Activated CD4-positive, alpha-beta T cell treated with anti-CD3 and anti-CD28 coated beads for 36 hours (primary cell): ENCODE measurements at regions of chr7 and their contacts with region 1.

Region 1: GRCh38 chr7:66493235-66494181 is 135.2 kb upstream of the KCTD7 start:
- DNase-seq: peak; percentile 98
- ATAC-seq: peak; percentile 94
- H3K4me3 Mint-ChIP-seq: peak overlapping the region; percentile 94
- H3K27ac Mint-ChIP-seq: peak overlapping the region; percentile 97
- H3K4me1 Mint-ChIP-seq: peaks cover 4% of the 10 kb centered on the region
- H3K27me3 Mint-ChIP-seq: no peaks in the 10 kb centered on the region

Region 2: DNA sequence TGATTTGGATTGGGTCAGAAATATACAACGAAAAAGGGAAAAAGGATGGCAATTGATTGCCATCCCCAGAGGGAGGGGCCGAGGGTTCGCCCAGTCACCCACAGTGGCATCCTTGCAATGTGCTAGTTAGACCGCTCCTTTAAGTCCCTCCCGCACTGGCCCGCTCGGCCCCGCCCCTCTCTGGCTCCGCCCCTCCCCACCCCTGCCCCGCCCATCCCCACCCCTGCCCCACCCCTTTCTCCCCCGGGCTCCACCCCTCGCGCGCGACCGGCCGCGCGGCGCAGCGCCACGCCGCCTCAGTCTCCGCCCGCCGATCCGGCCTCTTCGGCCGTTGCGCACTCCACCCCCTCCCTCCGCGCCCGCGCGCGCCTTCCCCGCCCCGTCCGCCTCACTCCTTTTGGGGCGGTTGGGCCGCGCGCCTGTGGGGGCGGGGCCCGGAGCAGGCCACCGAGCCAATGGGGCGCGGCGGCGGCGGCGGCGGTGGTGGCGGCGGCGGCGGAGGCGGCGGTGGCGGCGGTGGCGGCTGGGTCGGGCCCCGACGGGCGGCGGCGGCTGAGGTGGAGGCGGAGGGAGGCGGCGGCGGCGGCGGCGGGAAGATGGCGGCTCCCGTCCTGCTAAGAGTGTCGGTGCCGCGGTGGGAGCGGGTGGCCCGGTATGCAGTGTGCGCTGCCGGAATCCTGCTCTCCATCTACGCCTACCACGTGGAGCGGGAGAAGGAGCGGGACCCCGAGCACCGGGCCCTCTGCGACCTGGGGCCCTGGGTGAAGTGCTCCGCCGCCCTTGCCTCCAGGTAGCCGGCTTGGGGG is 620.5 kb before region 1 on chr7 and contains the start of gene VKORC1L1:
- CTCF ChIA-PET with region 1: no interaction called
- POLR2A ChIA-PET with region 1: no interaction called
- intact Hi-C with region 1: loop called in 1 of 2 experiments (anchors 1 kb)
- DNase-seq: peak; percentile 98
- ATAC-seq: peak; percentile 96
- H3K4me3 Mint-ChIP-seq: peak within 1 kb of the TSS; percentile 84
- H3K27ac Mint-ChIP-seq: peak within 1 kb of the TSS; percentile 75
- H3K4me1 Mint-ChIP-seq: peaks cover 7% of the 10 kb centered on the region
- H3K27me3 Mint-ChIP-seq: no peaks in the 10 kb centered on the region
- total RNA-seq, gene VKORC1L1: 16.5 to 17.6 TPM

Region 3: DNA sequence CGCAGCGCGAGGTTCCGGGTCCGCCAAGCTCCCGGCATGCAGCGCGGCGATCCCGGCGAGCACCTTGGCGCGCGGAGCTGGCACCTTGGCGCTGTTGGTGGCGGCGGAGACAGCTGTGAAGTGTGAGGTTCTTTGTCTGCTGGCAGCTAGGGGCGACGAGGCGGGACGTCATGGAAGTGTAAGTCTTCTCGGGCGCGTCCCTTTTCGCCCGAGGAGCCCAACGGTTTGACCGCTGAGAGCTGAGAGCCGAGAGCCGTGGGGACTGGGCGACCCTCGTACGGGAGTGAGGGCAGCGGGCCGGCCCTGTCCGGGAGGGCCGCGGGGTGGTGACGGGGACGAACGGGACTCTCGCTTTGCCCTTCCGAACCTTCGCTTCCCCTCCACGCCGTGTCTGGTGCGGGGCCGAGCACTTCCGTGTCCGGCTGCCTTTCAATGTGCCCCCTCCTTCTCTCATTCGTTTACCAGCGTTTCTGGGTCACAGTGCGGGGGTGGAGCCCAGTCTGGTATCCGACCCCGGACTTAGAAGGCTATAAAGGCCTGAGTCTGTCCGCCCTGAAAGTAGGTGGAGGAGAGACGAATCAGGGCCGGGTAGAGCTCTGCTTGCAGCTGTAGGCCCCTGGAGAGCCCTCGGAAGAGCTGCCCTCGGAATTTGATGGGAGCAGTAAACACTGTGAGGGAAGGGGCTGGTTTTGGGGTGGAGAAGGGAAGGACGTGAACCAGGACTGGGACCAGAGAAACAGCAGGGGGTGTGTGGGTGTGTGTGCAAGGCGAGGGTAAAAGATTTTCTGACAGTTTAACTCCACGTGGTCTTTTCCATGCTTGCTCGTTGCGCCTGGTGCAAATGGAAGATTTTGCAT is 378.5 kb before region 1 on chr7 and contains the start of gene CRCP:
- CTCF ChIA-PET with region 1: no interaction called
- POLR2A ChIA-PET with region 1: no interaction called
- intact Hi-C with region 1: loop called in 1 of 2 experiments (anchors 10 kb)
- DNase-seq: peak; percentile 91
- ATAC-seq: peak; percentile 91
- H3K4me3 Mint-ChIP-seq: peak within 1 kb of the TSS; percentile 95
- H3K27ac Mint-ChIP-seq: peak within 1 kb of the TSS; percentile 98
- H3K4me1 Mint-ChIP-seq: peaks cover 39% of the 10 kb centered on the region
- H3K27me3 Mint-ChIP-seq: no peaks in the 10 kb centered on the region
- total RNA-seq, gene CRCP: 24.5 to 27.2 TPM

Region 4: DNA sequence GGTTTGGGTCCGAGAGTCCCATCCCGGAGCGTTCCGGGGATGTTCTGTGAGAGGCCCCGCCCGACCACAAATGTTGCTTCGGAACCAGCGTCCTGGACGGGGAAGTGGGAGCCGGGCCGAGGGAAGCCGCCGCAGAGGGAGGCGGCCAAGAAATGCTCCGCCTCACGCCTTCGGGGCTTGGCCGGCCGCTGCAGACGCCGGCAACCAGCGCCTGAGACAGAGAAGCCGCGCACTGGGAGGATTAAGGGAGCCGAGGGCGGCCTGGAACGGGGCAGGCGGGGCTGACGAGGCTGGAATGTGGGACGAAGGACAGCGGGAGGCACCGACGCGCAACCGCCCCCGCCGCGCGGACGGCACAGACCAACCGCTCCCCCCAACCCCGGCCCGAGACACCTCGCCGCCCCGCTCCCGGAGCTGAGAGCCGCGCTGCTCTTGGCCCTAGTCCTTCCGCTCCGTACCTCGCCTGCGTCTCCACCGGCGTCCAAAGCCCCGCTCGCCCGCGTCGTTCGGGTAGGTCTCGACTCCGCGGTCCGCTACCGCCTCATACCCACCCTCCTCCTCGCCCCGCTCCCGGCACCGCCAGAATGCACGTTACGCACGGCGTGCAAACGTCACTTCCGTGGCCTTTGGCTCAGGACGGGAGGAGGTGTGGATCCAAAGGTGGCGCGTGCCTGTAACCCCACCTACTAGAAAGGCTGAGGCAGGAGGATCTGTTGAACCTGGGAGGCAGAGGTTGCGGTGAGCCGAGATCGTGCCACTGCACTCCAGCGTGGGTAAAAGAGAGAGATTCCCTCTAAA is 98.5 kb after region 1 on chr7:
- CTCF ChIA-PET with region 1: no interaction called
- POLR2A ChIA-PET with region 1: no interaction called
- intact Hi-C with region 1: loop called in 1 of 2 experiments (anchors 1 kb)
- DNase-seq: peak; percentile 96
- ATAC-seq: peak; percentile 98
- H3K4me3 Mint-ChIP-seq: peak overlapping the region; percentile 94
- H3K27ac Mint-ChIP-seq: peak overlapping the region; percentile 98
- H3K4me1 Mint-ChIP-seq: peaks cover 46% of the 10 kb centered on the region
- H3K27me3 Mint-ChIP-seq: no peaks in the 10 kb centered on the region

Region 5: GRCh38 chr7:66681491-66682349 is 188.2 kb after region 1 on chr7:
- CTCF ChIA-PET with region 1: no interaction called
- POLR2A ChIA-PET with region 1: no interaction called
- intact Hi-C with region 1: loop called (anchors 1 kb)
- DNase-seq: peak; percentile 98
- ATAC-seq: peak; percentile 95
- H3K4me3 Mint-ChIP-seq: peak overlapping the region; percentile 90
- H3K27ac Mint-ChIP-seq: peak overlapping the region; percentile 92
- H3K4me1 Mint-ChIP-seq: peaks cover 34% of the 10 kb centered on the region
- H3K27me3 Mint-ChIP-seq: no peaks in the 10 kb centered on the region

Region 6: GRCh38 chr7:66920769-66921395 is 427.4 kb after region 1 on chr7 and contains the start of gene TMEM248:
- CTCF ChIA-PET with region 1: no interaction called
- POLR2A ChIA-PET with region 1: no interaction called
- intact Hi-C with region 1: loop called in 1 of 2 experiments (anchors 1 kb)
- DNase-seq: peak; percentile 96
- ATAC-seq: peak; percentile 90
- H3K4me3 Mint-ChIP-seq: peak within 1 kb of the TSS; percentile 99
- H3K27ac Mint-ChIP-seq: peak within 1 kb of the TSS; percentile 98
- H3K4me1 Mint-ChIP-seq: peaks cover 33% of the 10 kb centered on the region
- H3K27me3 Mint-ChIP-seq: no peaks in the 10 kb centered on the region
- total RNA-seq, gene TMEM248: 70.5 to 85.8 TPM